ENCODE measurements at regions of chr3 and their contacts with region 1.

Region 1: GRCh38 chr3:30458376-30459171 is 147.8 kb upstream of the TGFBR2 start:
- DNase-seq: no peak
- H3K4me3 ChIP-seq: no peak overlapping the region
- H3K27ac ChIP-seq: peak overlapping the region in 1 of 2 donors; percentile 28
- H3K4me1 ChIP-seq: no peaks in the 10 kb centered on the region
- H3K27me3 ChIP-seq: no peaks in the 10 kb centered on the region
- CTCF ChIP-seq: no peak
- POLR2A ChIP-seq: no peak

Region 2: DNA sequence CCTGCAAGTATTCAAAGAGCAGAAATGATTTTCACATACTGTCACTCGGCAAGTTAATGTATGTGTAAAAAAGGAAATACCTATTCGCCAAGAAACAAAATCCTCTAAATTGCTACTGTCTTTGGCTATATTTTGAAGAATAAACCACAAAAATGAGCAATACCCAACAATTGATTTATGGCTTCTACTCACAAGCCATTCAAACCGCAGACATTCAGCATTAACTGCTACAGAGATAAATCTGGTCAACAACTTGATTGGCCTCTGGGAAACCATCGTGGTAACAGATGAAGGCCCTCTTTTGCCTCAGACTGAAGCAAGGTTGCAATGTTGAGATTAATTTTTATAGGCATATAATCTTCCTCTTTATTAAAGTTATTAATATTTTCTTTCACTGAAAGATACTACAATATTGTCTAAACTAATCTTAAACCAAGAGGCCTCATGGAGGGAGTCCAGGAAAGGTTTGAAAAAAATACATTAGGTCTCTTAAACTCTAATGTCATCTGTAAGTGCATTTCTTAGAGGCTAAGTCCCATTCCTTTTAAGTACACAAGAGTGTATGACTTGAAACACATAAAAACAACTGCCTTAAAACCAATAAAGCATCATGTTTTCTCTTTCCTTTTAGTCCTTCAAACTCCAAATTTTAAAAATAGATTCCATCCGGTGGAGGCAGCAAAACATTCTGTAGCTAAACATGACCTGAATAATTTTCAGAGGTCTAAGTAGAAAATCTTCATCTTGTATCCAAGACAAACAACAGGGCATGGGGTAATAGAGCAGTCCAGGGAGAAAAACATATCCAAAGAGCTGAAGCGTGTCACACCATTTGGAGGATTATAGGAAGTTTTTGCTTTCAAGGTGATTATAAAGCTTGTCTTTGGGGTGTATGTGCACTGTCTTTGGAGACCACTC is 14.6 kb before region 1 on chr3:
- intact Hi-C with region 1: loop called (anchors 1 kb)
- DNase-seq: no peak
- H3K4me3 ChIP-seq: no peak overlapping the region
- H3K27ac ChIP-seq: peak overlapping the region in 1 of 2 donors; percentile 40
- H3K4me1 ChIP-seq: no peaks in the 10 kb centered on the region
- H3K27me3 ChIP-seq: no peaks in the 10 kb centered on the region
- CTCF ChIP-seq: no peak
- POLR2A ChIP-seq: no peak

Region 3: GRCh38 chr3:30752945-30753344 is 294.4 kb after region 1 on chr3:
- intact Hi-C with region 1: no loop called
- DNase-seq: no peak
- H3K4me3 ChIP-seq: no peak overlapping the region
- H3K27ac ChIP-seq: no peak overlapping the region
- H3K4me1 ChIP-seq: no peaks in the 10 kb centered on the region
- H3K27me3 ChIP-seq: no peaks in the 10 kb centered on the region
- CTCF ChIP-seq: no peak
- POLR2A ChIP-seq: no peak